Activated T-helper 2 cell treated with anti-CD3 and anti-CD28 coated beads, Interferon-gamma antibody, Interleukin-2, Interleukin-4, amounts not matched to agents 10 μg/mL and 5 μg/mL and 100 μg/mL, durations not matched to agents 14 hours and 24 hours and 36 hours (primary cell): ENCODE measurements at regions of chr11 and their contacts with region 1.

Region 1: GRCh38 chr11:78079232-78080083 is at the start of gene NDUFC2:
- DNase-seq: peak; percentile 64
- H3K4me3 Mint-ChIP-seq: peak within 1 kb of the TSS; percentile 90
- H3K27ac Mint-ChIP-seq: peak within 1 kb of the TSS; percentile 82
- H3K4me1 Mint-ChIP-seq: peaks cover 44% of the 10 kb centered on the region
- H3K27me3 Mint-ChIP-seq: no peaks in the 10 kb centered on the region
- total RNA-seq, gene NDUFC2: 208 and 215 TPM in 2 replicates

Region 2: DNA sequence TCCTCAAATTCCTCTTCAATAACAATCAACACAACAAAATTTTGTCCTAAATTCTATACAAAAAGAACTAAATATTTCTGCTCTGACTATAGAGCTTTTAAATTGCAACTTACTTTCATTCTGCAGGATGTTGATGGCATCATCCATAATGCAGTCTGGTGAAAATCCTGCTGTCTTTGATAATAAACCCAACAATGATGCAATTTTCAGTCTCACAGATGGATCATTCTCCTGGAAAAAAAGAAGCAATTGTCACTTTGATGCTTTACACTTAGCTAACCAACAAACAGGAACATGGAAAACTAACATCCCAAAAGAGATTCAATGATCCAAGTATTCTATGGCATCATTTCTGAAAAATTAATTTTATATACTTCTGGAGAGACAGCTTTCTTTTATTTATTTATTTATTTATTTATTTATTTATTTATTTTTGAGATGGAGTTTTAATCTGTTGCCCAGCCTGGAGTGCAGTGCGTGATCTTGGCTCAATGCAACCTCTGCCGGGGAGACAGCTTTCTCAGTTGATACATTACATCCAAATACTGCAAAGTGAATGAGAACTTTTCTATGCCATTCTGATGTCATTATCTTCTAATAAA is 98.0 kb before region 1 on chr11:
- intact Hi-C with region 1: no loop called
- DNase-seq: no peak
- H3K4me3 Mint-ChIP-seq: no peak overlapping the region
- H3K27ac Mint-ChIP-seq: no peak overlapping the region
- H3K4me1 Mint-ChIP-seq: peaks cover 13% of the 10 kb centered on the region
- H3K27me3 Mint-ChIP-seq: no peaks in the 10 kb centered on the region

Region 3: GRCh38 chr11:78094250-78094649 is 14.8 kb after region 1 on chr11:
- intact Hi-C with region 1: loop called (anchors 2 kb)
- DNase-seq: no peak
- H3K4me3 Mint-ChIP-seq: no peak overlapping the region
- H3K27ac Mint-ChIP-seq: peak overlapping the region; percentile 84
- H3K4me1 Mint-ChIP-seq: peaks cover 11% of the 10 kb centered on the region
- H3K27me3 Mint-ChIP-seq: no peaks in the 10 kb centered on the region

Region 4: GRCh38 chr11:78127401-78127800 is 47.9 kb after region 1 on chr11:
- intact Hi-C with region 1: no loop called
- DNase-seq: no peak
- H3K4me3 Mint-ChIP-seq: no peak overlapping the region
- H3K27ac Mint-ChIP-seq: no peak overlapping the region
- H3K4me1 Mint-ChIP-seq: peaks cover 11% of the 10 kb centered on the region
- H3K27me3 Mint-ChIP-seq: no peaks in the 10 kb centered on the region

Region 5: GRCh38 chr11:78139422-78140391 is 60.2 kb after region 1 on chr11 and contains the start of gene ALG8:
- intact Hi-C with region 1: loop called (anchors 2 kb)
- DNase-seq: peak; percentile 97
- H3K4me3 Mint-ChIP-seq: peak within 1 kb of the TSS; percentile 89
- H3K27ac Mint-ChIP-seq: peak within 1 kb of the TSS; percentile 83
- H3K4me1 Mint-ChIP-seq: peaks cover 44% of the 10 kb centered on the region
- H3K27me3 Mint-ChIP-seq: no peaks in the 10 kb centered on the region
- total RNA-seq, gene ALG8: 58.6 and 70.1 TPM in 2 replicates